Activated CD4-positive, alpha-beta T cell treated with anti-CD3 and anti-CD28 coated beads for 36 hours (primary cell): ENCODE measurements at regions of chr1 and their contacts with region 1.

Region 1: DNA sequence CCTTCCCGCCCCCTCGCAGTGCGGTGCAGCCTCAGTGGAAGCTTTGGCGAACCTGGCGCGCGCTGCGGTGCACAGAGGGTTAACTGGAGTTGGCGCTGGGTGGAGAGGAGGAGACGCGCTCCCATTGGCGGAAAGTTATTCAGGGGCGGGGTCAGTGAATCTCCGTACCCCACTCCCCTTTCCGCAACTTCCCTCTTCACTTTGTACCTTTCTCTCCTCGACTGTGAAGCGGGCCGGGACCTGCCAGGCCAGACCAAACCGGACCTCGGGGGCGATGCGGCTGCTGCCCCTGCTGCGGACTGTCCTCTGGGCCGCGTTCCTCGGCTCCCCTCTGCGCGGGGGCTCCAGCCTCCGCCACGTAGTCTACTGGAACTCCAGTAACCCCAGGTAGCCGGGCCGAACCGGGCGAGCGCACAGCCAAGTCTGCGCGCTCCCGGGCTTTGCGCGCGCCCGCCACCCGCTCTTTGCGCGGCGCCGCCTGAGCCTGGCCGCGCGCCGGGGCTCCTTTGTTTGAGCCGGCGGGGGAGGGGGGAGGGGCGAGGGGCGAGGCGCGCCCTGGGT is at the start of gene EFNA4:
- DNase-seq: peak; percentile 92
- ATAC-seq: peak; percentile 87
- H3K4me3 Mint-ChIP-seq: peak within 1 kb of the TSS; percentile 83
- H3K27ac Mint-ChIP-seq: peak within 1 kb of the TSS; percentile 72
- H3K4me1 Mint-ChIP-seq: peaks cover 31% of the 10 kb centered on the region
- H3K27me3 Mint-ChIP-seq: no peaks in the 10 kb centered on the region
- total RNA-seq, gene EFNA4: 6.3 to 6.5 TPM

Region 2: GRCh38 chr1:153180556-153180955 is 1883.1 kb before region 1 on chr1:
- CTCF ChIA-PET with region 1: no interaction called
- POLR2A ChIA-PET with region 1: no interaction called
- intact Hi-C with region 1: no loop called
- DNase-seq: no peak
- ATAC-seq: no peak
- H3K4me3 Mint-ChIP-seq: no peak overlapping the region
- H3K27ac Mint-ChIP-seq: no peak overlapping the region
- H3K4me1 Mint-ChIP-seq: no peaks in the 10 kb centered on the region
- H3K27me3 Mint-ChIP-seq: peaks cover 17% of the 10 kb centered on the region

Region 3: GRCh38 chr1:154479764-154480421 is 583.7 kb before region 1 on chr1:
- CTCF ChIA-PET with region 1: no interaction called
- POLR2A ChIA-PET with region 1: no interaction called
- intact Hi-C with region 1: loop called in 1 of 2 experiments (anchors 5 kb)
- DNase-seq: peak; percentile 67
- ATAC-seq: peak; percentile 84
- H3K4me3 Mint-ChIP-seq: no peak overlapping the region
- H3K27ac Mint-ChIP-seq: no peak overlapping the region
- H3K4me1 Mint-ChIP-seq: peaks cover 27% of the 10 kb centered on the region
- H3K27me3 Mint-ChIP-seq: no peaks in the 10 kb centered on the region

Region 4: GRCh38 chr1:154906621-154907081 is 157.0 kb before region 1 on chr1:
- CTCF ChIA-PET with region 1: no interaction called
- POLR2A ChIA-PET with region 1: no interaction called
- intact Hi-C with region 1: loop called in 1 of 2 experiments (anchors 1 kb)
- DNase-seq: no peak
- ATAC-seq: peak; percentile 47
- H3K4me3 Mint-ChIP-seq: no peak overlapping the region
- H3K27ac Mint-ChIP-seq: no peak overlapping the region
- H3K4me1 Mint-ChIP-seq: no peaks in the 10 kb centered on the region
- H3K27me3 Mint-ChIP-seq: no peaks in the 10 kb centered on the region

Region 5: DNA sequence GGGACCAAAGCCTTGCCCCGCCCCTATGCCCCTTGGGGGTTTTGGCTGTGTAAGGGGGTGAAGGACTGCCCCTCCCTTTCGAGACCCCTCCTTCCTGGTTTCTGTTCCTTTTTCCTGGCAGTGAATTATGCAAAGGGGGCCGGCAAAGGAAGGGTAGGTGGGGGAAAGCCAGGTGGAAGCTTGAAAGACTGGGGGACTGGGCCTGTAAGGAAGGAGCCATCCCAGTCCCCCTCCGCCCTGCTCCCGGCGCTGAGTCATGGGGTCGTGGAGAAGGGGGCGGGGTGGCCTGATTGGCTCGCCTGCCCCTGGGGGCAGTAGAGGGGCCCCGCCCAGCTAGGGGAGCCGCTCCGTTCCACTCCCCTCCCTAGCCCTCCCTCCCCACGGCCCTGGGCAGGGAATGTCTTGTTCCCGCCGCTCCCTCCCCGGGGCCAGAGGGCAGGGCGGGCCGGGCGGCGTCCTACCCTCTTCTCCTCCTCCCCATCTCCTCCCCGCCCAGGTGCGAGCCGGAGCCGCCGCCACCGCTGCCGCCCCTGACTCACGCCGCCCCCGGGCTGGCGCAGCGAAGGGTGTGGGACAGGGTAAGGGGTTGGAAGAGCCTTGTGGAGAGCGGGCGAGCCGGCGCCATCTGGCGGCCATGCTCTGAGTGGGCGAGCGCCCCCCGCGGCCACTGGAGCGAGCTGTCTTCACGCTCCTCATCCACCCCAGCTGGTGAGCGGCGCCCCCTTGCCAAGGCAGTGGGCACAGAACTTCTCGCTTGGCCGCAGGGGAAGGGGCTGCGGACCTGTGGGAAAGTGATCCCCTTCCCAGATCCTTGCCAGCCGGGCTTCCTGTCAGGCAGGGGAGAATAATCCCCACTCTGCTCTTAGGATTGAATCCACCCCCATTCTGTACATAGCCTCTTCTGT is 46.3 kb before region 1 on chr1:
- CTCF ChIA-PET with region 1: interaction called, 7 read pairs
- POLR2A ChIA-PET with region 1: no interaction called
- intact Hi-C with region 1: loop called in 1 of 2 experiments (anchors 1 kb)
- DNase-seq: peak; percentile 97
- ATAC-seq: peak; percentile 87
- H3K4me3 Mint-ChIP-seq: peak overlapping the region; percentile 53
- H3K27ac Mint-ChIP-seq: peak overlapping the region; percentile 69
- H3K4me1 Mint-ChIP-seq: peaks cover 69% of the 10 kb centered on the region
- H3K27me3 Mint-ChIP-seq: no peaks in the 10 kb centered on the region

Region 6: GRCh38 chr1:155078469-155079209 is 15.0 kb after region 1 on chr1 and contains the start of gene EFNA3:
- CTCF ChIA-PET with region 1: interaction called, 81 read pairs
- POLR2A ChIA-PET with region 1: no interaction called
- intact Hi-C with region 1: loop called in 1 of 2 experiments (anchors 1 kb)
- DNase-seq: peak; percentile 83
- ATAC-seq: peak; percentile 34
- H3K4me3 Mint-ChIP-seq: peak within 1 kb of the TSS; percentile 61
- H3K27ac Mint-ChIP-seq: peak within 1 kb of the TSS; percentile 15
- H3K4me1 Mint-ChIP-seq: peaks cover 46% of the 10 kb centered on the region
- H3K27me3 Mint-ChIP-seq: peaks cover 31% of the 10 kb centered on the region
- total RNA-seq, gene EFNA3: 5.1 to 6.9 TPM

Region 7: GRCh38 chr1:155167166-155168104 is 103.8 kb after region 1 on chr1:
- CTCF ChIA-PET with region 1: interaction called, 8 read pairs
- POLR2A ChIA-PET with region 1: no interaction called
- intact Hi-C with region 1: loop called in 1 of 2 experiments (anchors 1 kb)
- DNase-seq: peak; percentile 95
- ATAC-seq: peak; percentile 88
- H3K4me3 Mint-ChIP-seq: peak overlapping the region; percentile 21
- H3K27ac Mint-ChIP-seq: peak overlapping the region; percentile 1
- H3K4me1 Mint-ChIP-seq: peaks cover 26% of the 10 kb centered on the region
- H3K27me3 Mint-ChIP-seq: no peaks in the 10 kb centered on the region